ENCODE measurements at regions of chr9 and their contacts with region 1.

Region 1: DNA sequence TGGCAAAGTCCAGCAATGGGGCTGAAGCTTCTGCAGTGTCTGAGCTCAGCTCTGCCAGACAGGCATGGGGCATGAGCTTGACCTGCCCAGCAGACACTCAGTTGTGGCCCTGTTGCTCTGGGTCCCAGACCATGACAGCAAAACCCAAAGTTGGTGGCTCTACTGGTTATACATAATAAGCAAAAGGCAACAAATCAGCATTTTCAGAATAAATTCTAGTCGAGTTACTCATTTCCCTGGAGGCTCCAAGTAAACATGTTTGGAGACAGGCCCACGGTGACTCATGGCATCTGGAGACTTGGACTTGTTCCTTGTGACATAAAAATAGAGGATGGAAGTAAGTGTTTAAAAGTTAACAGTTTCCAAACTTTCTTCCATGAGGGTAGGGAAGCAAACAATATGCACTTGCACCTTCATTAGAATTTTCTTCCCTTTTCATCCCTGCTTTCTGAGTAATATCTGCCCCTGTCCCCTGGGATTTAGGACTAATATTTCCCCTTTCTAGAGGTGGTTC is 60.2 kb upstream of the SLC2A8 start:
- DNase-seq: peak; percentile 94
- H3K4me3 ChIP-seq: no peak overlapping the region
- CTCF ChIP-seq: no peak

Region 2: GRCh38 chr9:127382541-127382940 is 45.7 kb after region 1 on chr9:
- in situ Hi-C with region 1: no loop called
- DNase-seq: no peak
- H3K4me3 ChIP-seq: no peak overlapping the region
- CTCF ChIP-seq: no peak

Region 3: GRCh38 chr9:127393645-127394044 is 56.9 kb after region 1 on chr9:
- in situ Hi-C with region 1: loop called (anchors 5 kb)
- DNase-seq: no peak
- H3K4me3 ChIP-seq: no peak overlapping the region
- CTCF ChIP-seq: peak; percentile 26